ENCODE measurements at regions of chr7 and their contacts with region 1.

Region 1: GRCh38 chr7:43582503-43583423 is at the start of gene STK17A:
- DNase-seq: peak; percentile 94
- ATAC-seq: peak; percentile 77
- H3K4me3 Mint-ChIP-seq: peak within 1 kb of the TSS; percentile 97
- H3K27ac Mint-ChIP-seq: peak within 1 kb of the TSS; percentile 99
- H3K4me1 Mint-ChIP-seq: peaks cover 31% of the 10 kb centered on the region
- H3K27me3 Mint-ChIP-seq: peaks cover 18% of the 10 kb centered on the region
- total RNA-seq, gene STK17A: 67.9 to 69.0 TPM

Region 2: DNA sequence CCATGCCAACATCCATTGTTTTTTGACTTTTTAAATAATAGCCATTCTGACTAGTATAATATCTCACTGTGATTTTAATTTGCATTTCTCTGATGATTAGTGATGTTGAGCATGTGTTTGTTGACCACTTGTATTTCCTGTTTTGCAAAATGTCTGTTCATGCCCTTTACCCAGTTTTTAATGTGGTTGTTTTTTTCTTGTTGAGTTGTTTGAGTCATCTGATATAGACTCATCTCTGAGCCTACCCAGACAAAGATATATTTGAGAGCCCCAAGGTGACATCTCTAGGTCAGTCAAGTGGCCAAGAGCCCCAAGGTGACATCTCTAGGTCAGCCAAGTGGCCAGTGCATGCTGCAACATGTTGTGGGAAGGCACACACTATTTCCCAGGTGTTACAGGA is 245.6 kb before region 1 on chr7:
- CTCF ChIA-PET with region 1: no interaction called
- POLR2A ChIA-PET with region 1: no interaction called
- DNase-seq: no peak
- ATAC-seq: no peak
- H3K4me3 Mint-ChIP-seq: no peak overlapping the region
- H3K27ac Mint-ChIP-seq: no peak overlapping the region
- H3K4me1 Mint-ChIP-seq: no peaks in the 10 kb centered on the region
- H3K27me3 Mint-ChIP-seq: peaks cover 4% of the 10 kb centered on the region

Region 3: DNA sequence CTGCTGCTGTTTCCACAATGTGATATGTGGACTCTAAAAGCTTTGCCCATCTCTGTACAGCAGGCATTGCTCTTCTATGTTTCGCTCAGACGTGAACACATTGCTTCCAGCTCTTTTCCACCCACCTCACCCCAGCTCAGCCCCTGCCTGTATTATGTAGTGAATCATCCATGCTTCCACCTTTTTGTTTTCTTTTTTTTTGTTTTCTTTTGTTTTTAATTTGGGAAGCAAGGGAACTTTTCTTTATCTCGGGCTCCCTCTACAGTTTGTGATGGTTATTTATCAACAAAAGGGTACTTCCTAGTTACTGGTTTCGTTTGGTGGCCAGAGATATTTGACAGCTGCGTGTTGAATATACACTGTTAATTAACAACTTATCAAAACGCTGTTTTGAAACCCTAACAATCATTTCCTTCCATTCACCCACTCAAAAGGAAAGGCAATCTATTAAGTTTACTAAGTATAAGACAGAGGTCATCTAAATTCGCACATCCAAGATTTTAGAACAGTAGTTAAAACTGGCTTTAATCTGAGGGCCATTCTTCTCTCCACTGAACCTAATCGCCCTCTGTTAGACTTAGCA is 127.7 kb before region 1 on chr7:
- CTCF ChIA-PET with region 1: interaction called, 15 read pairs
- POLR2A ChIA-PET with region 1: interaction called, 3 read pairs
- DNase-seq: no peak
- ATAC-seq: peak; percentile 67
- H3K4me3 Mint-ChIP-seq: no peak overlapping the region
- H3K27ac Mint-ChIP-seq: no peak overlapping the region
- H3K4me1 Mint-ChIP-seq: peaks cover 1% of the 10 kb centered on the region
- H3K27me3 Mint-ChIP-seq: peaks cover 10% of the 10 kb centered on the region

Region 4: DNA sequence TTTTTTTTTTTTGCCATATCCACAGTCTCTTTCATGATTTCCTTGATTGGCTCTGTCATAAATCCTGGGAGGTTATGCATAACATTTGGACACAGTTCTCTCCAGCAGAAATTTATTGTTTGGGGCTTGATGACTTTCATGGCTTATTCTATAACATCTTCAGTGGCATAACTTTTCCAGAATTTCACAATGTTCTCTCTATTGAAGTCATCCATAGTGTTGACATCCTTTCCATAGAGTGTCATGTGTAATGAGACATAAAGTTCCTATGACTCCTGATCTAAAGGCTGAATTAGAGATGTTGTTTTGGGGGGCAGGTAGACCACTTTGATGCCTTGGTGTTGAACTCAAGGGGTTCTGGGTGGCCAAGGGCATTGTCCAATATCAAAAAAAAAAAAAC is 36.5 kb before region 1 on chr7:
- CTCF ChIA-PET with region 1: no interaction called
- POLR2A ChIA-PET with region 1: no interaction called
- DNase-seq: no peak
- ATAC-seq: no peak
- H3K4me3 Mint-ChIP-seq: no peak overlapping the region
- H3K27ac Mint-ChIP-seq: no peak overlapping the region
- H3K4me1 Mint-ChIP-seq: no peaks in the 10 kb centered on the region
- H3K27me3 Mint-ChIP-seq: peaks cover 34% of the 10 kb centered on the region

Region 5: GRCh38 chr7:43602271-43602670 is 19.5 kb after region 1 on chr7:
- CTCF ChIA-PET with region 1: interaction called, 30 read pairs
- POLR2A ChIA-PET with region 1: interaction called, 6 read pairs
- DNase-seq: no peak
- ATAC-seq: no peak
- H3K4me3 Mint-ChIP-seq: no peak overlapping the region
- H3K27ac Mint-ChIP-seq: no peak overlapping the region
- H3K4me1 Mint-ChIP-seq: peaks cover 43% of the 10 kb centered on the region
- H3K27me3 Mint-ChIP-seq: no peaks in the 10 kb centered on the region

Region 6: GRCh38 chr7:43647673-43648472 is 65.1 kb after region 1 on chr7:
- CTCF ChIA-PET with region 1: interaction called, 150 read pairs
- POLR2A ChIA-PET with region 1: interaction called, 142 read pairs
- DNase-seq: peak; percentile 48
- ATAC-seq: peak; percentile 14
- H3K4me3 Mint-ChIP-seq: peak overlapping the region; percentile 71
- H3K27ac Mint-ChIP-seq: peak overlapping the region; percentile 89
- H3K4me1 Mint-ChIP-seq: peaks cover 95% of the 10 kb centered on the region
- H3K27me3 Mint-ChIP-seq: no peaks in the 10 kb centered on the region

Region 7: GRCh38 chr7:43700059-43700501 is 117.3 kb after region 1 on chr7:
- CTCF ChIA-PET with region 1: interaction called, 508 read pairs
- POLR2A ChIA-PET with region 1: interaction called, 79 read pairs
- DNase-seq: no peak
- ATAC-seq: peak; percentile 63
- H3K4me3 Mint-ChIP-seq: no peak overlapping the region
- H3K27ac Mint-ChIP-seq: no peak overlapping the region
- H3K4me1 Mint-ChIP-seq: peaks cover 71% of the 10 kb centered on the region
- H3K27me3 Mint-ChIP-seq: no peaks in the 10 kb centered on the region

Region 8: GRCh38 chr7:43758029-43758821 is 175.5 kb after region 1 on chr7 and contains the start of gene BLVRA:
- CTCF ChIA-PET with region 1: interaction called, 16 read pairs
- POLR2A ChIA-PET with region 1: interaction called, 4 read pairs
- DNase-seq: peak; percentile 66
- ATAC-seq: peak; percentile 89
- H3K4me3 Mint-ChIP-seq: peak within 1 kb of the TSS; percentile 75
- H3K27ac Mint-ChIP-seq: peak within 1 kb of the TSS; percentile 78
- H3K4me1 Mint-ChIP-seq: peaks cover 36% of the 10 kb centered on the region
- H3K27me3 Mint-ChIP-seq: peaks cover 4% of the 10 kb centered on the region
- total RNA-seq, gene BLVRA: 25.7 to 29.2 TPM